Calu3 (cell line): ENCODE measurements at regions of chr11 and their contacts with region 1.

Region 1: GRCh38 chr11:102666331-102666957 is 39.1 kb downstream of the MMP27 start:
- DNase-seq: peak; percentile 28
- H3K4me3 Mint-ChIP-seq: no peak overlapping the region
- H3K27ac Mint-ChIP-seq: no peak overlapping the region
- H3K4me1 Mint-ChIP-seq: no peaks in the 10 kb centered on the region
- H3K27me3 Mint-ChIP-seq: no peaks in the 10 kb centered on the region
- CTCF ChIP-seq: peak; percentile 57

Region 2: GRCh38 chr11:102341844-102342318 is 324.6 kb before region 1 on chr11:
- CTCF ChIA-PET with region 1: interaction called, 11 read pairs
- intact Hi-C with region 1: loop called (anchors 2 kb)
- DNase-seq: peak; percentile 65
- H3K4me3 Mint-ChIP-seq: no peak overlapping the region
- H3K27ac Mint-ChIP-seq: peak overlapping the region; percentile 15
- H3K4me1 Mint-ChIP-seq: peaks cover 27% of the 10 kb centered on the region
- H3K27me3 Mint-ChIP-seq: no peaks in the 10 kb centered on the region
- CTCF ChIP-seq: peak; percentile 54

Region 3: GRCh38 chr11:102390667-102391465 is 275.6 kb before region 1 on chr11:
- CTCF ChIA-PET with region 1: interaction called, 13 read pairs
- intact Hi-C with region 1: no loop called
- DNase-seq: peak; percentile 64
- H3K4me3 Mint-ChIP-seq: no peak overlapping the region
- H3K27ac Mint-ChIP-seq: no peak overlapping the region
- H3K4me1 Mint-ChIP-seq: peaks cover 15% of the 10 kb centered on the region
- H3K27me3 Mint-ChIP-seq: no peaks in the 10 kb centered on the region
- CTCF ChIP-seq: peak; percentile 77

Region 4: GRCh38 chr11:102653744-102654291 is 12.6 kb before region 1 on chr11:
- CTCF ChIA-PET with region 1: no interaction called
- intact Hi-C with region 1: no loop called
- DNase-seq: no peak
- H3K4me3 Mint-ChIP-seq: no peak overlapping the region
- H3K27ac Mint-ChIP-seq: no peak overlapping the region
- H3K4me1 Mint-ChIP-seq: no peaks in the 10 kb centered on the region
- H3K27me3 Mint-ChIP-seq: no peaks in the 10 kb centered on the region
- CTCF ChIP-seq: no peak

Region 5: DNA sequence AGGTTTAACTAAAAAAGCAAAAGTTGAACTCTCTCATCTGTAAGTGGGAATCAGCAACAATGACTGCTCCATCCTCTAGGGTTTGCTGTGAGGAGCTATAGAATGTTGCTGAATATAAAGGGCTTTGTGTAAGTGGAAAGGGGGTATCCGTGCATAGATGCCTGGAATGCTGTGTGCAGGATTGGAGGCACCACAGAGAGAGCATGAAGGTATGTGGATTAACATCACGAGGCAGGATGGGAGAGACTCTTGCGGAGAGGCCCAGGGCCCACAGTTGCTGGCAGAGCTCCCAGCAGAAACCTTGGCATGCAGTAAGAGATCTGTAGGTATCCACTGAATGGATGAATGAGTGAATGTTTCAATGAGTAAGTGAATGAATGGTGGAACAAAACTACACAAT is 1071.3 kb after region 1 on chr11:
- CTCF ChIA-PET with region 1: no interaction called
- intact Hi-C with region 1: no loop called
- DNase-seq: no peak
- H3K4me3 Mint-ChIP-seq: no peak overlapping the region
- H3K27ac Mint-ChIP-seq: no peak overlapping the region
- H3K4me1 Mint-ChIP-seq: peaks cover 18% of the 10 kb centered on the region
- H3K27me3 Mint-ChIP-seq: no peaks in the 10 kb centered on the region
- CTCF ChIP-seq: no peak